Body of pancreas (tissue), 4 donors: ENCODE measurements at regions of chr16 and their contacts with region 1.

Region 1: GRCh38 chr16:52069866-52070265 is 477.1 kb downstream of the TOX3 start:
- DNase-seq: no peak
- ATAC-seq: no peak
- H3K4me3 ChIP-seq: no peak overlapping the region
- H3K27ac ChIP-seq: no peak overlapping the region
- H3K4me1 ChIP-seq: peaks cover 9% of the 10 kb centered on the region
- H3K27me3 ChIP-seq: no peaks in the 10 kb centered on the region
- CTCF ChIP-seq: peak in 3 of 7 experiments; percentile 12 to 32 (median 20)
- POLR2A ChIP-seq: no peak

Region 2: GRCh38 chr16:52912565-52913173 is 842.8 kb after region 1 on chr16:
- intact Hi-C with region 1: loop called (anchors 10 kb)
- DNase-seq: peak; percentile 74 to 80 (median 76)
- ATAC-seq: peak; percentile 65
- H3K4me3 ChIP-seq: no peak overlapping the region
- H3K27ac ChIP-seq: no peak overlapping the region
- H3K4me1 ChIP-seq: no peaks in the 10 kb centered on the region
- H3K27me3 ChIP-seq: no peaks in the 10 kb centered on the region
- CTCF ChIP-seq: peak; percentile 64 to 87 (median 76)
- POLR2A ChIP-seq: no peak